ENCODE measurements at regions of chr12 and their contacts with region 1.

Region 1: DNA sequence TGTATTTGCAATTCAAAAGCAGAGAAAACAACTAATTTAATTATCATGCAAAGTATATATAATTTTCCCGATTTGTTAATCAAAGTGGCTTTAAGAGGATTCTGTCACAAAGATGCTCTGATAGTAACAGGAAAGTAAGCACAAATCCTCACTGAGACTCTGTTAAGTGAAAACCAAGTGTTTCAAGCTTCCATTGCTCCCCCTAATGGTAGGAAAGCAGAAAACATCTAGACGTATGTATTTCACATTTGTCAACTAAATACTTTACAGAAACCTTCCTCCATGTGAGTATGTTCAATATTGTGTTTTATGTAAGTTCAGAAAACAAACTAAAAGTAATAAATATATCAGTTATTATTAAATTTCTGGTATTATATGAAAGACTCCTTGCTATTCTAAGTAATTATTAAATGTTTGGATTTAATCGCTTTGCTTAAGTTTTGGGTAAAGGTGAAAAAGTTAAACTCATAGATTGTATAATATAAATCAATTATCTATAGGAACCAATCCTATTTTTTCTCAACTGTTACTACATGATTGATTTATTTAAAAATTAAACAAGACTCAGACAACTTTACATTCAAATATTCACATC is 1.5 kb upstream of the NTS start:
- DNase-seq: no peak
- H3K4me3 Mint-ChIP-seq: no peak overlapping the region
- H3K27ac Mint-ChIP-seq: no peak overlapping the region
- H3K4me1 Mint-ChIP-seq: no peaks in the 10 kb centered on the region
- H3K27me3 Mint-ChIP-seq: no peaks in the 10 kb centered on the region

Region 2: GRCh38 chr12:85424581-85425348 is 447.8 kb before region 1 on chr12:
- intact Hi-C with region 1: loop called (anchors 1 kb)
- DNase-seq: no peak
- H3K4me3 Mint-ChIP-seq: no peak overlapping the region
- H3K27ac Mint-ChIP-seq: no peak overlapping the region
- H3K4me1 Mint-ChIP-seq: no peaks in the 10 kb centered on the region
- H3K27me3 Mint-ChIP-seq: no peaks in the 10 kb centered on the region

Region 3: DNA sequence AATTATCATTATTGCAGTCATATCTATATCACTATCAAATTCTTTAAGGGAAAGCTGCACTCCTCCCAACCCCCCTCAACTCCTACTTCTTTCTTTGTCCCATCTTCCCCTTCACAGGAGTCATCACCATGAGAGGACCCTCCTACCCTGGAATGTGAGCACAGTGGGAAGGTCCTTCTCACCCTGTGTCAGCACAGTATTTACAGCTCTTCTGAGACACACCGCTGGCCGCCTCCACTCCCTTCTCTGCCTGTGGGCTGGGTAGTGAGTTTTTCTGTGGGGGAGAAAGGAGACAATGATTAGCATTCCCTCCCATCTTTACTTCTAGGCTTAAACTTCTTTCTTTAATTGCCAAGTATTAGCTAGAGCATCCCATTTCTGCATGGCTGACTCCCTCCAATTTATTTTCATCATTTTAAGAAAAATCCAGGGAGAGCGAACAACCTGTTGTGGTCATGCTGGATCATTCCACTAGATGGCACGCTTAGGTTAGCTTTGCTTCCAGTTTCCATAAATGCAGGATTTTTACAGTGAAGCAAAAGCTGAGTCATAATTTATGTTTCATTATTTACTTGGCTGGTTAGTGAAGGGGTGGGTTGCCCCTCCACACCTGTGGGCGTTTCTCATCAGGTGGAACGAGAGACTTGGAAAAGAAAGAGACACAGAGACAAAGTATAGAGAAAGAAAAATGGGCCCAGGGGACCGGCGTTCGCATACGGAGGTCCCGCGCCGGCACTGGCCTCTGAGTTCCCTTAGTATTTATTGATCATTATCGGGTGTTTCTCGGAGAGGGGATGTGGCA is 404.0 kb before region 1 on chr12:
- intact Hi-C with region 1: loop called (anchors 1 kb)
- DNase-seq: peak; percentile 13
- H3K4me3 Mint-ChIP-seq: peak overlapping the region; percentile 74
- H3K27ac Mint-ChIP-seq: no peak overlapping the region
- H3K4me1 Mint-ChIP-seq: peaks cover 17% of the 10 kb centered on the region
- H3K27me3 Mint-ChIP-seq: no peaks in the 10 kb centered on the region

Region 4: DNA sequence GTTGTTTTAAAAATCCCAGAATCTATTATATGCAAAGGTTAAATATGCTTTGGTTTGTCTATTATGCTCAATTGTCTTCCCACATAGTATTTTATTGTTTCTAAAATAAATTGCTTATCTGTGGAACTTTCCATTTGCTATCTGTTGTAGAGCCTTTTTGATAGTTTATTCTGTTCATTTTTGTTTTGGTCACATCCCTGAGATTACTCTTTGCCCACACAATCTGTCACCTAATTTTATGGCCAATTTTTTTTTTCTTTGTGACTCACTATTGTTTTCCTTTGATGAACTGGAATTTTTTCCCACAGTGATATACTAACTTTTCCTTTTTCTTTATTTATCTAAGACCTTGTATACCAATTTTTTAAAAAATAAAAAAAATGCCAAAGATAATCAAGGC is 97.5 kb before region 1 on chr12:
- intact Hi-C with region 1: no loop called
- DNase-seq: no peak
- H3K4me3 Mint-ChIP-seq: no peak overlapping the region
- H3K27ac Mint-ChIP-seq: no peak overlapping the region
- H3K4me1 Mint-ChIP-seq: no peaks in the 10 kb centered on the region
- H3K27me3 Mint-ChIP-seq: no peaks in the 10 kb centered on the region

Measured in activated T-helper 1 cell treated with anti-CD3 and anti-CD28 coated beads, Interleukin-12 subunit alpha, Interleukin-12 subunit beta, Interleukin-2, Interleukin-4 antibody, amounts not matched to agents 30 ng/mL and 10 ng/mL and 1 ng/mL, durations not matched to agents 14 hours and 24 hours and 36 hours (primary cell).